Spleen (tissue), 13 donors: ENCODE measurements at regions of chr1 and their contacts with region 1.

Region 1: GRCh38 chr1:7042322-7043190 is 257.3 kb downstream of the CAMTA1 start:
- DNase-seq: no peak
- H3K4me3 ChIP-seq: no peak overlapping the region
- H3K27ac ChIP-seq: no peak overlapping the region
- H3K4me1 ChIP-seq: no peaks in the 10 kb centered on the region
- H3K27me3 ChIP-seq: peaks cover 0 to 31% (median 0%) of the 10 kb centered on the region in 7 donors
- CTCF ChIP-seq: peak in 9 of 11 experiments; percentile 14 to 54 (median 44)
- POLR2A ChIP-seq: no peak

Region 2: DNA sequence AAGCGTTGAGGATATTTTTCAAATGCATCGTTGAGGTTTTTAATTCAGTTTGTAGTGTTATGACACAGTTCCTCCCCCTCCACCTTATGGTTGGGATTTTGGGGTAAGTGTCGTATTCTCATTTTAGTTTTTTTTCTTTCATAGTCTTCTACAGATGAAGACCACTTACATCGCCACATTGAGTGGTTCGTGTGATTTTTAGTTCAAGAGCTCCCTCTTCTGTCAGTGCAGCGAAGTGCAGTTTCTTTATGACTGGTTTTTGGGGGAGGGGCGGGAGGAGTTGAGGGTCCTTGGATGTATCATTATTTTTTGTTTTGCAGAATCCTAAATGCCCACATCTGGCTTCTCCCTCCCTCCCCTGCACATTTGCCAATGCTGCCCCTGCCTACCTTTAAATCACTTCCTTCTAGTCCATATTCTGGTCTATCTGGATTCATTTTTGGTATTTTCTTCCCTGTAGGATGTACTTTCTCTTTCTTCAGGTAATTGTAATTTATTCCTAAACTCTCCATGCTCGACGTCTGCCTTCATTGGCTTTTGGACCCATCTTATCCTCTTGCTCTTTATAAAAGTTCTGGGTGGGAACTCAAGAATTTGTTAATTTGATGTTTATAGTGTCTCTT is 175.8 kb after region 1 on chr1:
- intact Hi-C with region 1: loop called (anchors 10 kb)
- DNase-seq: no peak
- H3K4me3 ChIP-seq: no peak overlapping the region
- H3K27ac ChIP-seq: no peak overlapping the region
- H3K4me1 ChIP-seq: no peaks in the 10 kb centered on the region
- H3K27me3 ChIP-seq: peaks cover 0 to 11% (median 0%) of the 10 kb centered on the region in 7 donors
- CTCF ChIP-seq: peak in 10 of 11 experiments; percentile 41 to 87 (median 65)
- POLR2A ChIP-seq: no peak

Region 3: GRCh38 chr1:7646981-7647901 is 604.7 kb after region 1 on chr1:
- intact Hi-C with region 1: loop called (anchors 10 kb)
- DNase-seq: peak; percentile 93
- H3K4me3 ChIP-seq: no peak overlapping the region
- H3K27ac ChIP-seq: no peak overlapping the region
- H3K4me1 ChIP-seq: peaks cover 0 to 26% (median 17%) of the 10 kb centered on the region in 6 donors
- H3K27me3 ChIP-seq: peaks cover 0 to 29% (median 0%) of the 10 kb centered on the region in 7 donors
- CTCF ChIP-seq: peak; percentile 54 to 95 (median 87)
- POLR2A ChIP-seq: no peak